ENCODE measurements at regions of chr10 and their contacts with region 1.

Region 1: GRCh38 chr10:68139448-68140272 is 30.4 kb downstream of the MYPN start:
- DNase-seq: no peak
- ATAC-seq: no peak
- H3K4me3 ChIP-seq: no peak overlapping the region
- H3K27ac ChIP-seq: peak overlapping the region; percentile 79 to 88 (median 85)
- H3K4me1 ChIP-seq: peaks cover 46 to 69% of the 10 kb centered on the region in 2 donors
- H3K27me3 ChIP-seq: no peaks in the 10 kb centered on the region
- CTCF ChIP-seq: no peak
- POLR2A ChIP-seq: no peak

Region 2: DNA sequence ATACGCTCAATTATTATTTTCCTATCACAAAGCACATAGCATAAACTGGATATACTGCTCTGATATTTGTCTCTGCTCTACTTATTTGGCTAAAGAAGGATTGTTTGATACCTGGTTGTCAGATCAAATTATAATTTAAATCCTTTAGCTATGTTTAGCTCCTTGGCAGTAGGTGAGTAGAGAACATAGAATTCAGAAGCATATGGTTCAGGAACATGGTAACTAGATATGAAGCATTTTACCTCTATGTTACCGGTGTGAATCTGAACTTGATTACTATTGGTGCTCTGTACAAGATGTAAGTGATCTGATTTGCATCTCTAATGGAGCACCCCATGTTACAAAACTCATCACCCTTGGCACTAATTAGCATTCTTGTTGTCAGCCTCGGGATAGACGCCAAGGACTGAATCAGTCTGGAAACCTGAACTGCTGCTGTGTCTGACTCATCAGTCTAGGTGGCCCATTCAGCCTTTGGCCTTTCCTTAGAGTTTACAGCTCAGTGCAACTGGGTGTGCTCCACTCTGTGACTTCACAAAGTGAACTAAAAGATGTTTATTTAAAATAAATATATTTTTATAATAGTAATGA is 42.7 kb before region 1 on chr10:
- in situ Hi-C with region 1: loop called in 1 of 4 experiments (anchors 10 kb)
- intact Hi-C with region 1: no loop called
- DNase-seq: peak; percentile 78 to 85
- ATAC-seq: peak; percentile 98
- H3K4me3 ChIP-seq: no peak overlapping the region
- H3K27ac ChIP-seq: peak overlapping the region; percentile 87 to 93 (median 91)
- H3K4me1 ChIP-seq: peaks cover 45 to 48% of the 10 kb centered on the region in 2 donors
- H3K27me3 ChIP-seq: no peaks in the 10 kb centered on the region
- CTCF ChIP-seq: no peak
- POLR2A ChIP-seq: peak in 1 of 2 donors; percentile 33

Region 3: GRCh38 chr10:68288717-68289116 is 149.1 kb after region 1 on chr10:
- in situ Hi-C with region 1: no loop called
- intact Hi-C with region 1: no loop called
- DNase-seq: no peak
- ATAC-seq: no peak
- H3K4me3 ChIP-seq: no peak overlapping the region
- H3K27ac ChIP-seq: no peak overlapping the region
- H3K4me1 ChIP-seq: no peaks in the 10 kb centered on the region
- H3K27me3 ChIP-seq: no peaks in the 10 kb centered on the region
- CTCF ChIP-seq: no peak
- POLR2A ChIP-seq: no peak

Region 4: DNA sequence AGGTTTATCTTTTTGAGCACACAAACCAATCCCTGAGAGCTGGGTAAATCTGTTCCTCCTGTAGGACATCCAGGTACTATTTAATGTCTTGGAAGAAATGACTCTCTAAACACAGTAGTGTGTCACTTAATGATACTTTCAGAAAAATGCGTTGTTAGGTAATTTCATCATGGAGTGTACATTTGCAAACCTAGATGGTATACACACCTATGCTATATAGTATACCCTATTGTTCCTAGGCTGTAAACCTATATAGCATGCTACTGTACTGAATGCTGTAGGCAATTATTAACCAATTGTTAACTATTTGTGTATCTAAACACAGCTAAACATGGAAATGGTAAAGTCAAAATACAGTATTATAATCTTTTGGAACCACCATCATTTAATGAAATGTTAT is 257.3 kb after region 1 on chr10:
- in situ Hi-C with region 1: no loop called
- intact Hi-C with region 1: no loop called
- DNase-seq: no peak
- ATAC-seq: no peak
- H3K4me3 ChIP-seq: no peak overlapping the region
- H3K27ac ChIP-seq: no peak overlapping the region
- H3K4me1 ChIP-seq: no peaks in the 10 kb centered on the region
- H3K27me3 ChIP-seq: no peaks in the 10 kb centered on the region
- CTCF ChIP-seq: no peak
- POLR2A ChIP-seq: no peak

Measured in gastrocnemius medialis (tissue), 4 donors.